Mammary epithelial cell (primary cell): ENCODE measurements at regions of chr14 and their contacts with region 1.

Region 1: DNA sequence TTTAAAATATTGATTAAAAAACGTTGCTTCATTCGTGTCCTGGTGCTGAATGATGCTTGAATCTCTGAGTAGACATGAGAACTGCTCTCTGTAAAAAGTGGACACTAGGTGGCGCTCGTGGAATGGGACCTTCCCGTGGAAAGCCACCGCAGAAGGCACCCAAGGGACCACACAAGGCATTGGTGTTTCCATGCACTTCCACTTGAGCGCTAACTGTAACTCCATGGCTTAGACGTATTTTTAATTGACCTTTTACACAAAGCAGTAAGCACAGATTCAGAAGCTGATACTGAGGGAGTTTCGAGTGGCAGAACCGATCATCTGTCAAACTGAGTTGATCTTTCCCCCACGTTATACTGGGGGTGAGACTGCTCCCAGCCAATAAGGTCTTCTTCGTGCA is 135.3 kb downstream of the PRKCH start:
- DNase-seq: peak; percentile 49
- H3K4me3 ChIP-seq: no peak overlapping the region
- H3K27ac ChIP-seq: no peak overlapping the region
- H3K4me1 ChIP-seq: peaks cover 10% of the 10 kb centered on the region
- H3K27me3 ChIP-seq: no peaks in the 10 kb centered on the region
- CTCF ChIP-seq: peak; percentile 81 to 85

Region 2: GRCh38 chr14:62117010-62117750 is 660.5 kb after region 1 on chr14:
- CTCF ChIA-PET with region 1: no interaction called
- dilution Hi-C with region 1: no loop called
- in situ Hi-C with region 1: loop called (anchors 10 to 25 kb)
- intact Hi-C with region 1: no loop called
- DNase-seq: peak; percentile 40
- H3K4me3 ChIP-seq: peak overlapping the region in 2 of 3 experiments; percentile 4 to 15
- H3K27ac ChIP-seq: no peak overlapping the region
- H3K4me1 ChIP-seq: no peaks in the 10 kb centered on the region
- H3K27me3 ChIP-seq: peaks cover 22% of the 10 kb centered on the region
- CTCF ChIP-seq: peak; percentile 9 to 43